ENCODE measurements at regions of chr1 and their contacts with region 1.

Region 1: DNA sequence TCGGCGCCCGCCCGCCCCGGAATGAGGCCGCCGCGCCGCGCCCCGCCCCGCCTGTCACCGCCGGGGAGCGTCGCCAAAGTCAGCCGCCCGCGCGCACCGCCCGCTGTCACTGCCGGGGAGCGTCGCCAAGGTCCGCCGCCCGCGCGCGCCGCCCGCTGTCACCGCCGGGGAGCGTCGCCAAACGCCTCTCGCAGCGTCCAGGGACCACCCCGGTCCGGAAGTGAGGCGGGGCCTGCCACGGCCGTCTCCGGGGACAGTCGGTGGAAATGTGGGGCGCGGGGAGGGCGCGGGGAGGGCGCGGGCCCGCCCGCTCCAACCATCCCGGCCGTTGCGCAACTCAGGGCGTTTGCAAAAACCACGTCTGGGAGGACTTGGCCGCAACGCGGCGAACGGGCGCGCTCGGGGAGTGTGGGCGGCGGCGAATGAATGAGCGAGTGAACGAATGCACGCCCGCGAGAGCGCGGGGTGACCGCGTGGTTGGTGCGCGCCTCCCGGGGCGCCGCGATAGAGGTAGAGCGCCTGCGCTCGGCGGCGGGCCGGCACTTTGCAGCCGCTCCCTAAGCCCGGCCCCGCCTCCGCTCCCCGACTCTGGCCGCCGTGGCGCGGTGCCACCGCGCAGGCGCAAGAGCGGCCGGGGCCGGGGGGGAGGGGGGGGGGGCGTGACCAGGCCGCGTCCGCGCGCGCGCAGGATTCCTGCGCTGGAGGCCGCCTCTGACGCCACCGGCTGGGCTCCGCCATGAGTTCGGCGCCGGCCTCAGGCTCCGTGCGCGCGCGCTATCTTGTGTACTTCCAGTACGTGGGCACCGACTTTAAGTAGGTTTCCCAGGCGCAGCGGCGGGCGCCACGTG is at the starts of genes ACAP3 and PUSL1:
- DNase-seq: peak; percentile 40
- ATAC-seq: peak; percentile 68
- H3K4me3 ChIP-seq: peak within 1 kb of the TSS; percentile 84
- H3K27ac ChIP-seq: peak within 1 kb of the TSS; percentile 78
- H3K4me1 ChIP-seq: peaks cover 27% of the 10 kb centered on the region
- H3K27me3 ChIP-seq: no peaks in the 10 kb centered on the region
- CTCF ChIP-seq: no peak
- EP300 ChIP-seq: no peak
- POLR2A ChIP-seq: peak; percentile 76
- RAD21 ChIP-seq: no peak
- polyA plus RNA-seq, gene ACAP3: 0.05 to 0.11 TPM
- polyA plus RNA-seq, gene PUSL1: 0.16 to 1.5 TPM

Region 2: GRCh38 chr1:1115786-1116700 is 192.1 kb before region 1 on chr1 and contains the start of gene C1orf159:
- CTCF ChIA-PET with region 1: interaction called, 3 read pairs
- POLR2A ChIA-PET with region 1: no interaction called
- RAD21 ChIA-PET with region 1: no interaction called
- SMC1A ChIA-PET with region 1: no interaction called
- in situ Hi-C with region 1: no loop called
- intact Hi-C with region 1: loop called (anchors 5 kb)
- DNase-seq: peak; percentile 74
- ATAC-seq: peak; percentile 98
- H3K4me3 ChIP-seq: peak within 1 kb of the TSS; percentile 91
- H3K27ac ChIP-seq: no peak within 1 kb of the TSS
- H3K4me1 ChIP-seq: no peaks in the 10 kb centered on the region; the same call in 1 of the 2 replicates
- H3K27me3 ChIP-seq: peaks cover 0 to 6% of the 10 kb centered on the region in 2 experiments; a peak in 3 of 4 replicates
- CTCF ChIP-seq: no peak
- EP300 ChIP-seq: no peak
- POLR2A ChIP-seq: peak; percentile 62
- RAD21 ChIP-seq: no peak
- polyA plus RNA-seq, gene C1orf159: 0.11 to 0.44 TPM